Mammary epithelial cell (primary cell): ENCODE measurements at regions of chr10 and their contacts with region 1.

Region 1: DNA sequence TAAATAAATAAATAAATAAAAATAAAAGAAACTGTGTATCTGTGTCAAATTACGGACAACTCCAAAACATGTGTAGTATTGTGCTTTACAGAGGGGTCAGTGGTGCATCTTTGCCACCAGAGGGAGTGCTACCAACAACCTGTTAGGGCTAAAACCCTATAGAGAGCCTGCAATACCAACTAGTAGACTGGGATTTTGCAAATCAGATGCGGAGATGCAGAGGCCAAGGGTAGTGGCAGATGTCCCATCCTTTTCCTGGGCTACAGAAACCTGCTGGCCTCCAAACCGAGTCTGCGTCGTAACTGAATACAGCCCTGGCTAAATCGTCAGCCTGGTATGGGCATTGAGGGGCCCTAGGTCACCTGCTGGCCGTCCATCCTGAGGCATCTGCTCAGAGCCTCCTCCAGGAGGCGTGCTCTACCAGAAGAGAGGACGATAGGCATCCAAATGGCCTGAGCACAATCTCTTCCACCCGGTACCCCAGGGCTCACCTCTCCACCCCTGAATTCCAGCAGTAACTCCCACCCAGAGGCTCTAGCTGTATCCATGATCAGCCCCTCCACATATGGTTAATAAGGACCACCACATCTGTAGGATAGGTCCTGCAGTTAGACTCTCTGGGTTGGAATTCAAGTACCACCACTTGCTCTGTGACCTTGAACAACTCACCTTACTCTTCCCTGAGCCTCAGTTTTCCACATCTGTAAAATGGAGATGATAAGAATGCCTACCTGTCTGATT is 6.2 kb upstream of the RRP12 start:
- DNase-seq: peak; percentile 78
- H3K4me3 ChIP-seq: no peak overlapping the region
- H3K27ac ChIP-seq: peak overlapping the region; percentile 9
- H3K4me1 ChIP-seq: peaks cover 33% of the 10 kb centered on the region
- H3K27me3 ChIP-seq: no peaks in the 10 kb centered on the region
- CTCF ChIP-seq: peak; percentile 64 to 71

Region 2: DNA sequence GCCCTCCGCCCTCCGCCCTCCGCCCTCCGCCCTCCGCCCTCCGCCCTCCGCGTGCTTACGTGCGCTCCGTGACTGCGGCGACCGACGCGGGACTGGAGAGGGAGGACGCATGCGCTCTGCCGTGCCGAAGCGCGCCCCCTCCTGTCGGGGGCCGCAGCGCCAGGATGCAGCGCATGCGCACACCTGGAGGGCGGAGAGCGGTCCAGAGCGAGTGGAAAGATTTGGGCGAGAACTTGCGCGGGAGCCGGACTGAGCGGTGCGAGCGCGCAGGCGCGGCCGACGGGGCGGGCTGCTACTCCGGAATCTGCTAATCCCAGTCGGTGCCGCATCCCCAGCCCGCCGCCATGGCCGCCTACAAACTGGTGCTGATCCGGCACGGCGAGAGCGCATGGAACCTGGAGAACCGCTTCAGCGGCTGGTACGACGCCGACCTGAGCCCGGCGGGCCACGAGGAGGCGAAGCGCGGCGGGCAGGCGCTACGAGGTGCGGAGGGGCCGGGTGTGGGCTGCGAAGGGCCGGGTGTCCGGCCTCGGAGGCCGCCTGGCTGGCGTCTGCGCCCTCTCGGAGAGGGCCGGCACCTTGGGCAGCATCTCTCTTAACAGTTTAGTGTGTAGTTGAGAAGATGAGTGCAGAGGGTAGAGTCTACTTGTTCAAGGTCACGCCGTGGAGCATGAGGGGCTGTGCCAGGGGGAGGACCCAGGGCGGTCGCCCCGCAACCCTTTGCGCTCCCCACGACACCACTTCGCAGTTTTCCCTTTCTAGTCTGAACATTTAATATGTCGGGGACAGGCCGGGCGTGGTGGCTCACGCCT is 18.8 kb after region 1 on chr10 and contains the start of gene PGAM1:
- CTCF ChIA-PET with region 1: interaction called, 3 read pairs
- dilution Hi-C with region 1: no loop called
- in situ Hi-C with region 1: no loop called
- intact Hi-C with region 1: loop called (anchors 1 kb)
- DNase-seq: peak; percentile 96
- H3K4me3 ChIP-seq: peak within 1 kb of the TSS; percentile 83 to 98 (median 97)
- H3K27ac ChIP-seq: peak within 1 kb of the TSS; percentile 86
- H3K4me1 ChIP-seq: peaks cover 16% of the 10 kb centered on the region
- H3K27me3 ChIP-seq: no peaks in the 10 kb centered on the region
- CTCF ChIP-seq: peak; percentile 61 to 83
- total RNA-seq, gene PGAM1: 380 to 517 TPM

Region 3: GRCh38 chr10:97434055-97434454 is 26.7 kb after region 1 on chr10:
- CTCF ChIA-PET with region 1: interaction called, 3 read pairs
- dilution Hi-C with region 1: no loop called
- in situ Hi-C with region 1: no loop called
- intact Hi-C with region 1: loop called (anchors 1 kb)
- DNase-seq: no peak
- H3K4me3 ChIP-seq: no peak overlapping the region
- H3K27ac ChIP-seq: no peak overlapping the region
- H3K4me1 ChIP-seq: no peaks in the 10 kb centered on the region
- H3K27me3 ChIP-seq: no peaks in the 10 kb centered on the region
- CTCF ChIP-seq: peak in 1 of 2 donors; percentile 7

Region 4: DNA sequence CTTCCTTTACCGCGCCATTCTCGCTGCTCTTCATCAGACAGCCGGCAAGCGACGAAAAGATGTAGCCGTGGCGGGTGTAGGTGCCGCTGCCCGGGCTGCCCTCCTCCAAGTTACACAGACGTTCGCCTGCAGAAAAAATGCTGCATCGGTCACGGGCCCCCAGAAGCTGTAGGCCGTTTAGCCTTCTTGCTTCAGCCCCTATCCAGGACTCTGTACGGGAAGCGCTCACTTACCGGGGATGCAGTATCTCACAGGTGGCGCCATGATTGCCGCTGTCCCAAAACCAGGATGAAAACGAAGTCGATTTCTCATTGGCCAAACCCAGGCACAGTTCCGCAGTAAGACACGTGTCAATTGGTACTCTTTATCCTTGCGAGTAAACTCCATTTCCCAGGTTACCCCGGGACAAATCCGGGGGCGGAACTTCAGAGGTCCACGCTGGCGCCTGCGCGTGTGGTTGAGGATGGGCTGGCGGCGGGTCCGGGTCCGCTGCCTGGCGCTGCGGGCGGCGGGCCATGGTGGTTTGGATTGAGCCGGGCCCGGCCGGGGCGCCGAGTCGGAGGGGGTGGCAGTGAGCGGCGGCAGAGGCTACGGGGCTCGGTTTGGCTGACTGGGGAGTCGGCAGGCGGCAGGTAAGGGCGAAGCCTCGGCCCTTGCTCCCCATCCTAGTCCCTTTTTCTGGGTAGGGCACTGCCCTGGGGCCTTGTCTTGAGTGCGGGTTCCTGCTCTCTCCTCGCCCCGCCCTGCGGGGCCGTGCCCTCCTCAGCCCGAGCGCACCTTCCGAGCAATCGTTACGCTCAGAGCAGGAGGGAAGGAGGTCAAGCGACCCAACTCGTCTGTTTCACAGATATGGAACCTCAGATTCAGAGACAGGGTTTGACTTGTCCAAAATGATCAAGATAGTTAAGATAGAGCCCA is 38.6 kb after region 1 on chr10 and contains the starts of genes EXOSC1 and ZDHHC16:
- CTCF ChIA-PET with region 1: no interaction called
- dilution Hi-C with region 1: no loop called
- in situ Hi-C with region 1: no loop called
- intact Hi-C with region 1: loop called (anchors 1 kb)
- DNase-seq: peak; percentile 96
- H3K4me3 ChIP-seq: peak within 1 kb of the TSS; percentile 68 to 82 (median 72)
- H3K27ac ChIP-seq: peak within 1 kb of the TSS; percentile 47
- H3K4me1 ChIP-seq: peaks cover 26% of the 10 kb centered on the region
- H3K27me3 ChIP-seq: no peaks in the 10 kb centered on the region
- CTCF ChIP-seq: peak in 1 of 2 donors; percentile 23
- total RNA-seq, gene EXOSC1: 35.8 to 37.0 TPM
- total RNA-seq, gene ZDHHC16: 46.3 to 61.3 TPM

Region 5: DNA sequence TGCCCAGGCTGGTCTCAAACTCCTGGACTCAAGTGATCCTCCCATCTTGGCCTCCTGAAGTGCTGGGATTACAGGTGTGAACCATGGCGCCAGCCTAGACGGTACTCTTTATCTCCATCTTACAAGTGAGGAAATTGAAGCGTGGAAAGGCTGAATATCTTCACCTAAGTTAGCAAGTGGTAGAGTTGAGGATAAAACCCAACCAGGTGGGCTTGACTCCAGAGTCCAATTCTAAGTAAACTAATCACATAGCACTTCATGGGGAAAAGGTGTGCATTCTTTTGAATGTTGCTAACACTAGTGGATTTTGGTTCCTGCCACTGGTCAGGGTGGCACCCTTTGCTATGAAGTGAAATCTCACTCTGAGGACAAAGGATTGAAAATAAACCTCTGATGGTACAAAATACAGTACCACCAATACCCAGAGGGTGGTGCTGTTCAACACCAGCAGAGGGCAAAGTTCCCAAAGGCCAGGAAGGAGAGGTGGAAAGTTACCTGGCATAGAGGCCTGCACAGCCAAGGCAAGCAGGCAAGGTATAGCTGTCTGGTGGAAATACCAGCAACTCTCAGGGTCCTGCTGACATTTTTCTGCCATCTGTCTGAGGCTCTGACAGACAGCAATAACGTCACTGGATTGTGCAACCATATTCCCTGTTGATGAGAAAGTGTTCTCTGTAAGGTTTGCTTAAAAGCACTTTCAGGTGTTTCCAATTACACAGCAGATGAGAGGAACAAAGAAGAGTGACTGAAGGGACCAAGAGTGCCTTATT is 56.2 kb after region 1 on chr10:
- CTCF ChIA-PET with region 1: no interaction called
- dilution Hi-C with region 1: no loop called
- in situ Hi-C with region 1: no loop called
- intact Hi-C with region 1: loop called (anchors 1 kb)
- DNase-seq: peak; percentile 65
- H3K4me3 ChIP-seq: no peak overlapping the region
- H3K27ac ChIP-seq: no peak overlapping the region
- H3K4me1 ChIP-seq: peaks cover 26% of the 10 kb centered on the region
- H3K27me3 ChIP-seq: no peaks in the 10 kb centered on the region
- CTCF ChIP-seq: peak; percentile 90 to 91

Region 6: GRCh38 chr10:97553575-97554031 is 146.2 kb after region 1 on chr10:
- CTCF ChIA-PET with region 1: no interaction called
- dilution Hi-C with region 1: no loop called
- in situ Hi-C with region 1: no loop called
- intact Hi-C with region 1: loop called (anchors 1 kb)
- DNase-seq: peak; percentile 56
- H3K4me3 ChIP-seq: no peak overlapping the region
- H3K27ac ChIP-seq: no peak overlapping the region
- H3K4me1 ChIP-seq: peaks cover 35% of the 10 kb centered on the region
- H3K27me3 ChIP-seq: no peaks in the 10 kb centered on the region
- CTCF ChIP-seq: peak; percentile 89 to 98